ENCODE measurements at regions of chr20 and their contacts with region 1.

Region 1: DNA sequence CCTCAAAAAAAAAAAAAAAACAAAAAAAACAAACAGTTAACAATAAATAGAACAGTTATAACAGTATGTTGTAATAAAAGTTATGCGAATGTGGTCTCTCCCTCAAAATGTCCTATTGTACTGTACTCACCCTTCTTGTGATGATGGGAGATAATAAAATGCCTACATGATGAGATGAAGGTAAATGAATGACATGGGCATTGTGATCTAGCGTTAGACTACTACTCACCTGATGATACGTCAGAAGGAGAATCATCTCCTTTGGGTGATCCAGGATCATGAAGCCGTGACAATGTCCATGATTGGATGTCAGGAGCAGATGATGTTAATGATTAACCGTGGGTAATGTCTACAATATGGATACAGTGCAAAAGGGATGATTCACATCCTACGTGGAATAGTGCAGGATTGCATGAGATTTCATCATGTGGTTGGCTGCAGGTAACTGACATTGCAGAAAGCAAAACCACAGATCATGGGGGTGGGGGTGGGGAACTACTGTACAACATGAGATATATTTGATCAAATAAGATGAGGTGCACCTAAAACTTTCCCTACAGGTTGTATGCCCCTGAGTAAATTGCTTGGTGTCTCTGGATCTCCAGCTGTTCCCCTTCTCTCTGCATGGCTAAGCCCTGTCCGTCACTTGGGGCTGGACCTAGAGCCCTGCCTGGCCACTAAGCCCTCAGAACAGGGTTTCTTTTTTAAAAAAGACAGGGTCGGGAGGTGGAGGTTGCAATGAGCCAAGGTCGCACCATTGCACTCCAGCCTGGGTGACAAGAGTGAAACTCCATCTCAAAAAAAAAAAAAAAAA is 6.2 kb upstream of the RBCK1 start:
- DNase-seq: peak; percentile 100
- H3K4me3 ChIP-seq: no peak overlapping the region
- H3K27ac ChIP-seq: peak overlapping the region; percentile 69
- H3K4me1 ChIP-seq: peaks cover 25% of the 10 kb centered on the region
- H3K27me3 ChIP-seq: no peaks in the 10 kb centered on the region
- CTCF ChIP-seq: no peak

Region 2: GRCh38 chr20:297098-297924 is 104.6 kb before region 1 on chr20 and contains the start of gene ZCCHC3:
- CTCF ChIA-PET with region 1: no interaction called
- dilution Hi-C with region 1: no loop called
- in situ Hi-C with region 1: no loop called
- intact Hi-C with region 1: no loop called
- DNase-seq: peak; percentile 90
- H3K4me3 ChIP-seq: peak within 1 kb of the TSS; percentile 69 to 84 (median 77)
- H3K27ac ChIP-seq: peak within 1 kb of the TSS; percentile 88
- H3K4me1 ChIP-seq: peaks cover 23% of the 10 kb centered on the region
- H3K27me3 ChIP-seq: no peaks in the 10 kb centered on the region
- CTCF ChIP-seq: peak in 1 of 2 donors; percentile 16
- total RNA-seq, gene ZCCHC3: 9.2 to 11.5 TPM

Region 3: GRCh38 chr20:381581-382290 is 20.2 kb before region 1 on chr20:
- CTCF ChIA-PET with region 1: no interaction called
- dilution Hi-C with region 1: no loop called
- in situ Hi-C with region 1: no loop called
- intact Hi-C with region 1: loop called (anchors 2 kb)
- DNase-seq: peak; percentile 78
- H3K4me3 ChIP-seq: peak overlapping the region; percentile 84 to 97 (median 87)
- H3K27ac ChIP-seq: peak overlapping the region; percentile 29
- H3K4me1 ChIP-seq: peaks cover 18% of the 10 kb centered on the region
- H3K27me3 ChIP-seq: no peaks in the 10 kb centered on the region
- CTCF ChIP-seq: no peak

Region 4: GRCh38 chr20:462199-462991 is 60.5 kb after region 1 on chr20 and contains the start of gene TBC1D20:
- CTCF ChIA-PET with region 1: no interaction called
- dilution Hi-C with region 1: no loop called
- in situ Hi-C with region 1: no loop called
- intact Hi-C with region 1: loop called (anchors 5 kb)
- DNase-seq: peak; percentile 81
- H3K4me3 ChIP-seq: peak within 1 kb of the TSS; percentile 84 to 90 (median 89)
- H3K27ac ChIP-seq: peak within 1 kb of the TSS; percentile 69
- H3K4me1 ChIP-seq: peaks cover 22% of the 10 kb centered on the region
- H3K27me3 ChIP-seq: no peaks in the 10 kb centered on the region
- CTCF ChIP-seq: peak in 1 of 2 donors; percentile 35
- total RNA-seq, gene TBC1D20: 36.5 to 43.2 TPM

Region 5: DNA sequence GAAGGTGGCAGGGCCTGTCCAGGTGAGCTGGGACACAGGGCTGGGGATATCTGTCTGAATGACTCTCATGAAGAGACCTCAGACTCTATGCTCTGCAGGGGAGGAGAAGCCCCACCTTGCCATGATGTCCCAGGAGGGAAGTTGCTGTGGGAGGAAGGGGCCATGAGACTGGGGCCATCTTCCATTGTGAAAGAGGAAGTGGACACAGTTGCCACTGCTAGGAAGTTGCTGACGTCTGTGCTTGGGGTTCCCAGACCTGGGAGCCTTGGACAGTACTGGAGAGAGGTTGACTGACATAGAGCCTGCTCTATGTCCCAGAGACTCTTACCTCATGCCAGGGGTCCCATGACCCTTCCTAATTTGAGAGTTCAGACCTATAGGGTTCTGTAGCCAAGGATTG is 1193.4 kb after region 1 on chr20:
- CTCF ChIA-PET with region 1: no interaction called
- dilution Hi-C with region 1: no loop called
- in situ Hi-C with region 1: no loop called
- intact Hi-C with region 1: no loop called
- DNase-seq: no peak
- H3K4me3 ChIP-seq: no peak overlapping the region
- H3K27ac ChIP-seq: no peak overlapping the region
- H3K4me1 ChIP-seq: no peaks in the 10 kb centered on the region
- H3K27me3 ChIP-seq: no peaks in the 10 kb centered on the region
- CTCF ChIP-seq: no peak

Measured in mammary epithelial cell (primary cell).